WTC11 (cell line): ENCODE measurements at regions of chr17 and their contacts with region 1.

Region 1: GRCh38 chr17:10683853-10684252 is 13.5 kb downstream of the SCO1 start:
- DNase-seq: no peak
- ATAC-seq: no peak
- H3K4me3 Mint-ChIP-seq: no peak overlapping the region
- H3K27ac Mint-ChIP-seq: no peak overlapping the region
- H3K4me1 Mint-ChIP-seq: no peaks in the 10 kb centered on the region
- H3K27me3 Mint-ChIP-seq: no peaks in the 10 kb centered on the region
- CTCF ChIP-seq: no peak

Region 2: GRCh38 chr17:10646392-10646990 is 37.4 kb before region 1 on chr17:
- CTCF ChIA-PET with region 1: interaction called, 21 read pairs
- POLR2A ChIA-PET with region 1: no interaction called
- DNase-seq: peak; percentile 83
- ATAC-seq: peak; percentile 90
- H3K4me3 Mint-ChIP-seq: no peak overlapping the region
- H3K27ac Mint-ChIP-seq: no peak overlapping the region
- H3K4me1 Mint-ChIP-seq: no peaks in the 10 kb centered on the region
- H3K27me3 Mint-ChIP-seq: no peaks in the 10 kb centered on the region
- CTCF ChIP-seq: peak; percentile 67